ENCODE measurements at regions of chr14 and their contacts with region 1.

Region 1: GRCh38 chr14:68979021-68979782 is at the start of gene ACTN1:
- DNase-seq: peak; percentile 94
- H3K4me3 ChIP-seq: peak within 1 kb of the TSS; percentile 97
- H3K27ac ChIP-seq: peak within 1 kb of the TSS; percentile 100
- H3K27me3 ChIP-seq: no peaks in the 10 kb centered on the region
- CTCF ChIP-seq: no peak
- polyA plus RNA-seq, gene ACTN1: 641 and 751 TPM in 2 replicates

Region 2: GRCh38 chr14:68939893-68940613 is 39.1 kb before region 1 on chr14:
- CTCF ChIA-PET with region 1: no interaction called
- POLR2A ChIA-PET with region 1: interaction called, 25 read pairs
- DNase-seq: peak; percentile 80
- H3K4me3 ChIP-seq: no peak overlapping the region
- H3K27ac ChIP-seq: peak overlapping the region; percentile 90
- H3K27me3 ChIP-seq: no peaks in the 10 kb centered on the region
- CTCF ChIP-seq: no peak

Region 3: GRCh38 chr14:68951042-68951914 is 27.9 kb before region 1 on chr14:
- CTCF ChIA-PET with region 1: no interaction called
- POLR2A ChIA-PET with region 1: interaction called, 16 read pairs
- DNase-seq: peak; percentile 81
- H3K4me3 ChIP-seq: peak overlapping the region; percentile 13; the same call in 1 of the 2 replicates
- H3K27ac ChIP-seq: peak overlapping the region; percentile 90
- H3K27me3 ChIP-seq: no peaks in the 10 kb centered on the region
- CTCF ChIP-seq: no peak

Region 4: DNA sequence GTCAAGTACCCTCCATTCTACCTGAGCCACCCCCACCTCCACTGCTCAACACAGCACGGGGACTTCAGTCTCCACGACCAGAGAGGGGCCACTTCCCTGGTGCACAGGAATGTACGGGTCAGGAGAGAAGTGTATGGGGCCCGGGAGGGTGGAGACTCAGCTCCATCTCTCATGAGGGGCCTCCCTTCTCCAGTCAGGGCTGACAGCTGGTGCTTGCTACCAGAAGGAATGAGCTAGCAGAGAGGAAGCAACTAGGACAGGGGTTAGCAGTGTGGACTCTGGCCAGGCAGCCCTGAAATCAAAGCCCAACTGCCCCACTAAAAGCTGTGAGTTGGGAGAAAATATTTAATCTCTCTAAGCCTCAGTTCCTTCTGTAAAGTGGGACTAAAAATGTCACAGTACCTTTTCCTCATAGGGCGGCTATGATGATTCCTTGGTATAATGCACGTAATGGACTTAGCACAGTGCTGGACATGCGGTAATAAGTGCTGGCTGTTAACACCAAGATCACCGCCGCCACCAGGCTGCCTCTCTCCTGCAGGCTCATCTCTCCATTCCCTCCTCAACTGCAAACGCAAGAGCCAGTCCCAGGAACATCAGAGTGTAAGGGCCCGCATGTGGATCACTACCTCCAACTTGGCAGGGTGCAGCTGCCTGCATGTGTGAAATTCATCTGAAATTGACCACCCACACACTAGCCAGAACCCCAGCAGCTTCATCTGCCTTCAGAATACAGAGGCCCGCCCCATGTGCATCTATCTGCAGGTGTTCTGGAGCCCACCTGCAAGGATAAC is 14.7 kb before region 1 on chr14:
- CTCF ChIA-PET with region 1: interaction called, 3 read pairs
- POLR2A ChIA-PET with region 1: interaction called, 11 read pairs
- DNase-seq: no peak
- H3K4me3 ChIP-seq: peak overlapping the region; percentile 7; the same call in 1 of the 2 replicates
- H3K27ac ChIP-seq: peak overlapping the region; percentile 62
- H3K27me3 ChIP-seq: no peaks in the 10 kb centered on the region
- CTCF ChIP-seq: no peak

Region 5: DNA sequence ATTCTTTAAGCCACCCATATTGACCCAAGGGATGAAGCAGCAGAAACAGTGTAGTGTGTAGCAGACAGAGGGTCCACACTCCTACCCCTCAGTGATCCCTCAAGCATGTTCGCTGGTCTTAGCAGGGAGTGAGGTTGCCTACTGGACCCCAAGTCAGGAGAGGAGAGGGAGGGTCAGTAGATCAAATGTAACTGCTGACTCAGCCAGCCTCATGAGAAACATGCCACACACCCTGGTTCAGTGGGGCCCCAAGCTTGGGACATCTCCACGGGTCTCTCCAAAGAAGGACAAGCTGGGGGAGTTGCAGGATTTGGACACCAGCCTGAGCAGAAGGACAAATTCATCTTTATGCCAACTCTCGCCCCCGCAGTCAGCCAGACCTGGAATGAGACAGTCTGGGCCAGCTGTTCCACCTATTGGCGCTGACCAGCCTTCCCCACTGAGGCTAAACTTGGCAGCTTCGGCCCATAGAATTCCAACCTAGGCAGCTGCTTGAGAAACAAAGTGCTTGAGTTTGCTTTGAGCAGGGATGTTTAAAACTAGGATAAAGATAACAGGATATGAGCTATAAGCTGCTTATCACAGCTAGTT is 65.9 kb after region 1 on chr14:
- CTCF ChIA-PET with region 1: no interaction called
- POLR2A ChIA-PET with region 1: interaction called, 14 read pairs
- DNase-seq: no peak
- H3K4me3 ChIP-seq: no peak overlapping the region
- H3K27ac ChIP-seq: peak overlapping the region; percentile 87
- H3K27me3 ChIP-seq: no peaks in the 10 kb centered on the region
- CTCF ChIP-seq: no peak

Measured in AG04450 (cell line).